B cell (primary cell): ENCODE measurements at regions of chr5 and their contacts with region 1.

Region 1: DNA sequence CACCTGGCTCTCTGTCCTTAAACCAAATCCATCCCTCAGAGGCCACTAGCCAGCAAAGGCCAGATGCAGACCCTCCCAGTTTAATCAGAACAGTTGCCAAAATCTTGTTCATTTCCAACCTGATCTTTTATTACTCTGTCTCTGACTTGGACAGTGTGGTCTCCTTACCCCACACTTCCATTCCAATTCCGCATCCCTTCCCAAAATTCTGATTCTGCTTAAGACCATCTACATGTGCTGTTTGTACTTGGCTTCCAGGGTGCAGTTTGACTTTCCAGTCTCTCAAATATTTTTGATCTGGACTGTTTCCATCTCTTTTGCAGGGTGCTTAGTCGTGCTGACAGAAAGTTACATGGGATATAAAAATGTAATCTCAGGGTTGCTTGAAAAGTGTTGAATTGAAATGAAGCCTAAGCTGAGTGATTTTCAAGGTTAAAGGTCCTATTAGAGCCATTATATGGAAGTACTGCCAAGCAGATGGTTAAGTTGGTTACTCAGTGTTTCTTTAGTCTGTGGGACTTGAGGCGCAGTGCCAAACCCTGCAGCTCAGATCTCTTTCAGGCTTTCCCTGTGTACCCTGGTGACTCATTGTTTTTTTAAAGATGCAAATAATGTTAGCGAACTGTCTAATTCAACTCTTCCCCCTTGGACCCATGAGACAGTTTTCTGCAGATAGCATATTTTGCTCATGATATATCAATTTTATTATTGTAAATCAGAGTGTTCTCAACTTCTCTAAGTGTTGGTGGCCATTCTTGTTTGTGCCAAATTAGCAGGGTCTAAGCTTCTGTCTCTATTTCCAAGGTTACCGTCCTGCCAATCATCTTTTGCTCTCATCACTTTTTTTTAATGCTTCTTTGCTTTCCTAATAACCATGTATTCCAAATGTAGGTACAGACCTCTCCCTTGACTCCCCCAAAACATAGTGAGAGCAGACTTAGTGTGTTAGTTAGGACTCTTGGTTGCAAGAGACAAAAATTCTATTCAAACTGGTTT is 18.2 kb upstream of the DCP2 start:
- DNase-seq: no peak
- ATAC-seq: no peak
- H3K4me3 ChIP-seq: no peak overlapping the region
- H3K4me3 Mint-ChIP-seq: no peak overlapping the region
- H3K27ac ChIP-seq: no peak overlapping the region
- H3K27ac Mint-ChIP-seq: no peak overlapping the region
- H3K4me1 ChIP-seq: no peaks in the 10 kb centered on the region
- H3K4me1 Mint-ChIP-seq: peaks cover 13% of the 10 kb centered on the region
- H3K27me3 ChIP-seq: no peaks in the 10 kb centered on the region
- H3K27me3 Mint-ChIP-seq: no peaks in the 10 kb centered on the region
- CTCF ChIP-seq: no peak

Region 2: GRCh38 chr5:112560371-112560770 is 398.0 kb before region 1 on chr5:
- CTCF ChIA-PET with region 1: no interaction called
- POLR2A ChIA-PET with region 1: no interaction called
- intact Hi-C with region 1: no loop called
- DNase-seq: no peak
- ATAC-seq: no peak
- H3K4me3 ChIP-seq: no peak overlapping the region
- H3K4me3 Mint-ChIP-seq: no peak overlapping the region
- H3K27ac ChIP-seq: no peak overlapping the region
- H3K27ac Mint-ChIP-seq: no peak overlapping the region
- H3K4me1 ChIP-seq: no peaks in the 10 kb centered on the region
- H3K4me1 Mint-ChIP-seq: no peaks in the 10 kb centered on the region
- H3K27me3 ChIP-seq: no peaks in the 10 kb centered on the region
- H3K27me3 Mint-ChIP-seq: peaks cover 2% of the 10 kb centered on the region
- CTCF ChIP-seq: no peak

Region 3: GRCh38 chr5:112907166-112907631 is 51.2 kb before region 1 on chr5:
- CTCF ChIA-PET with region 1: interaction called, 4 read pairs
- POLR2A ChIA-PET with region 1: no interaction called
- intact Hi-C with region 1: loop called (anchors 5 kb)
- DNase-seq: no peak
- ATAC-seq: no peak
- H3K4me3 ChIP-seq: no peak overlapping the region
- H3K4me3 Mint-ChIP-seq: no peak overlapping the region
- H3K27ac ChIP-seq: peak overlapping the region in 1 of 2 donors; percentile 27
- H3K27ac Mint-ChIP-seq: peak overlapping the region; percentile 27
- H3K4me1 ChIP-seq: peaks cover 14 to 16% of the 10 kb centered on the region in 2 donors
- H3K4me1 Mint-ChIP-seq: peaks cover 32% of the 10 kb centered on the region
- H3K27me3 ChIP-seq: no peaks in the 10 kb centered on the region
- H3K27me3 Mint-ChIP-seq: no peaks in the 10 kb centered on the region
- CTCF ChIP-seq: no peak

Region 4: DNA sequence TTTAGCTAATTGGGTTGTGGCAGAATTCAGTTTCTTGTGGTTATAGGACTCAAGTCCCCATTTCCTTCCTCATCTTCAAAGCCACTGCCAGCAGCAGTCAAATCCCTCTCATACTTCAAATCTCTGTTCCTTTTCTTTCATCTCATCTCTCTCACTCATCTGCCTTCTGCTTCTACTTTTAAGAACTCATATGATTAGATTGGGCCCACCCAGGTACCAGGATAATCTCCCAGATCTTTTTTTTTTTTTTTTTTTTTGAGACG is 28.4 kb before region 1 on chr5:
- CTCF ChIA-PET with region 1: interaction called, 10 read pairs
- POLR2A ChIA-PET with region 1: no interaction called
- intact Hi-C with region 1: no loop called
- DNase-seq: peak; percentile 77
- ATAC-seq: peak; percentile 66
- H3K4me3 ChIP-seq: peak overlapping the region in 1 of 5 experiments; percentile 32
- H3K4me3 Mint-ChIP-seq: peak overlapping the region; percentile 69
- H3K27ac ChIP-seq: peak overlapping the region; percentile 54 to 81
- H3K27ac Mint-ChIP-seq: peak overlapping the region; percentile 86
- H3K4me1 ChIP-seq: peaks cover 68 to 70% of the 10 kb centered on the region in 2 donors
- H3K4me1 Mint-ChIP-seq: peaks cover 58% of the 10 kb centered on the region
- H3K27me3 ChIP-seq: no peaks in the 10 kb centered on the region
- H3K27me3 Mint-ChIP-seq: no peaks in the 10 kb centered on the region
- CTCF ChIP-seq: no peak